Esophagus muscularis mucosa (tissue), 4 donors: ENCODE measurements at regions of chr6 and their contacts with region 1.

Region 1: DNA sequence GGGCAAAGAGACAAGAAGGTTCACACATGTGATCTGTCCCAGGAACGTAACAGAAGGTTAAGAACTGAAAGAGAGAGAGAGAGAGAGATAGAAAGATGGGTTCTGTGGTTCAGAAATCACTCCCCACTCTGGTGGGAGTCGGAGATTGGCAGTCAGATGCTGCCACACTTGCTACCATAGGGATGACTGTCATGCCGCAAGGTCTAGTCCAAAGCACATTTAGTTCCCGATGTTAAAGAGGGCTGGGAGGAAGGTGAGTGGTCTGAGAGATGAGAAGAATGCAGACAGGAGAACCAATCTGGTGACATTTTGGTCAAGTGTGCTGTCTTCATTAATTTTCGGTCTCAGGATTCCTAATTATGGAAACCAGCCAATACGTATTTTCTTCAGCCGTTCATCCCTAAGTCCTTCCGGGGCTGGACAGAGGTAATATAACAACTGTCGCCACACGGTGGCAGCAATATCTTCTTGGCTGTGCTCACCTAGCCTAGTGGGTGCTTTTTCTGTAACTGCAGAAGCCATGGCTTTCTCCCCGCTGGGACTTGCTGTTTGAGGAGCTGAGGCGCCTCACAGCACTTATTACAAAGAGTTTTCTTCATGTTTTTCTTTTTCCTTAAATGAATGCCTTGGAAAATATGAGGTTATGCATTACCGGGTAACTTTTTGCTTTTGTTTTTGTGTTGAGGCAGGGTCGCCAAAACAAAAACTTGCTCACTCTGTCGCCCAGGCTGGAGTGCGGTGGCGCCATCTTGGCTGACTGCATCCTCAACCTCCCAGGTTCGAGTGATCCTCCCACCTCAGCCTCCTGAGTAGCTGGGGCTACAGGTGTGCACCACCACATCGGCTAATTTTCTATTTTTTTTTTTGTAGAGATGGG is 46.0 kb downstream of the SLC35D3 start:
- DNase-seq: no peak
- H3K4me3 ChIP-seq: no peak overlapping the region
- H3K27ac ChIP-seq: no peak overlapping the region
- H3K4me1 ChIP-seq: no peaks in the 10 kb centered on the region
- H3K27me3 ChIP-seq: no peaks in the 10 kb centered on the region
- CTCF ChIP-seq: peak; percentile 57 to 66 (median 65)
- EP300 ChIP-seq: no peak
- POLR2A ChIP-seq: no peak

Region 2: DNA sequence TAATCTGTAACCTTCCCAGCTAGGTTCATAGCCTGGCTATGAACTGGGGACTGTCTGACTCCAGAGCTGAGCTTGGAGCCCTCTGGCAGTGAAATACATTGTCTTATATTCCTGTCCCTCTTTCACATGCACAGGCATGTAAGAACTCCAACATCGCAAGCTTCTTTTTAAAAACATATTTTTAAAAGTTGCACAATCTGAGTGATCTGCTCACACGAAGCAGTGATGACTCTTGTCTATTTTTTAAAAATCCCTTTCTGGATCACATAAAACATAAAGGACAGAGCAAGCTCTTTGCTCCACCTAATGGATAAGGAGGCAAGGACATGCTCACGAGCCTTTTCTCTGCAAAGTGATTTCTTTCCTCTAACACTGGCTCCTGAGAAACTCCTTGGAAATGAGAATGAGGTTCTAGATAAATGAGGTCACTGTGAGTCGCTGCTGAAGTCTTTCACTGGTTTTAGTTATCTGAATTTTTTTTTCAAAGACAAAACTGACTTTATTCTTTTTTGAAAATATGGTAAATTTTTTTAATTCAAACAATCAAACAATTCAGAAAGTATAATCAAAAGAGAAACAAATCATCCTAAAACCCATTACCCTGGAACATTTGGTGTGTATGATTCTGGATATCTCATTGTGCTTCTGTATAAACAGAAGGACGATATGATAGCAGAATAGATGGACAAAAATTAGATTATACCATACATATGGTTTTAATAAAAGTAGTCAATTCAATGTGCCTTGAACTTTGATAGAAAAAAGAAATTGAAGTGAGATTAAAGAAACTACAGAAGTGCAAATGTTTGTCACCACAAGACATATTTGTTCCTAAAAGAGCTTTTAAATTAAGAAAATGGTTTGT is 45.9 kb after region 1 on chr6:
- intact Hi-C with region 1: loop called (anchors 5 kb)
- DNase-seq: no peak
- H3K4me3 ChIP-seq: no peak overlapping the region
- H3K27ac ChIP-seq: no peak overlapping the region
- H3K4me1 ChIP-seq: peaks cover 0 to 16% (median 12%) of the 10 kb centered on the region in 4 donors
- H3K27me3 ChIP-seq: peaks cover 0 to 8% (median 0%) of the 10 kb centered on the region in 4 donors
- CTCF ChIP-seq: peak; percentile 36 to 48 (median 46)
- EP300 ChIP-seq: no peak
- POLR2A ChIP-seq: no peak

Region 3: DNA sequence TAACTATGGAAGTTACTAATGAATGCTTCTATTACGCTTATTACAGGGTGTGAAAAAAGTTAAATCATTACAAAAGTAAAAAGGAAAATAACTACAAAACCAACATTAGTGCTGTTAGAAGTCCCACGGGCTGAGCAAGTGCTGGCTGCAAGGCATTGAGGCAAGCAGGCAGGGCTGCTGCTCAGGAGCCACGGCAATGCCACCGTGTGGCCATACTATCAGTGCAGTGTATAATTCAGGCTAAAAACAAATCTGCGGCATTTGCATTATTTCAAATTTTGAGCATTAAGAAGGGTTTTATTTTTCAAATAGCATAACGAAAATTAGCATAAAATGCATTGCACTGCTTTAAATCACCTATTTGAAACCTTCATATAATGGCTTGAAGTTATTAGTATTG is 234.0 kb after region 1 on chr6:
- intact Hi-C with region 1: no loop called
- DNase-seq: no peak
- H3K4me3 ChIP-seq: no peak overlapping the region
- H3K27ac ChIP-seq: no peak overlapping the region
- H3K4me1 ChIP-seq: peaks cover 0 to 14% (median 7%) of the 10 kb centered on the region in 4 donors
- H3K27me3 ChIP-seq: no peaks in the 10 kb centered on the region
- CTCF ChIP-seq: peak in 1 of 3 experiments; percentile 14
- EP300 ChIP-seq: no peak
- POLR2A ChIP-seq: no peak